Activated CD4-positive, alpha-beta T cell treated with anti-CD3 and anti-CD28 coated beads for 36 hours (primary cell): ENCODE measurements at regions of chr3 and their contacts with region 1.

Region 1: DNA sequence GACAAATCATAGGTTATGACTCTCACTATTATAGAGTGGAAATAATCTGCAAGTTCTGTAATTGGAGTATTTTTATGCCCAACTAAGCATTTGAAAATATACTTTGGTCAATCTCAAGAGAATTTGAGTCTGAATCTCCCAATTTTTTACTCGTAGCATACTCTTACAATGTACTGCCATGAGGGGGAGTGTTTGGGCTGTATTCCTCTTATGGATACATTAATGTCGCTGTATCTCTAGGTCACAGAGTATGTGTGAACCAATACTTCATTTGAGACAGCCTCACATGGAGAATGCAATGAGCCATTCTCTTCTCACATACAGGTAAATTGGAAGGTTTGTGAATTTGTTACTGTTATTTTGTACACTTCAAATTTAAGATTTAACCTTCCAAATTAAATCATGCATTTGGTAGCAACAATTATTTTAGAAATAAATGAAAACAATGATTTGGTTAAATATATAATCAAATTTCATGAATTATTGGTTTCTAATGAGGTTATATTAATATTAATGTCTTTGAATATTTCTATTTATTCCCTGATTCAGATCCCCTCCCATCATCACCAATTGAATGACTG is 5.5 kb upstream of the CD200 start:
- DNase-seq: peak; percentile 54
- ATAC-seq: peak; percentile 100
- H3K4me3 Mint-ChIP-seq: no peak overlapping the region
- H3K27ac Mint-ChIP-seq: no peak overlapping the region
- H3K4me1 Mint-ChIP-seq: peaks cover 4% of the 10 kb centered on the region
- H3K27me3 Mint-ChIP-seq: peaks cover 7% of the 10 kb centered on the region

Region 2: DNA sequence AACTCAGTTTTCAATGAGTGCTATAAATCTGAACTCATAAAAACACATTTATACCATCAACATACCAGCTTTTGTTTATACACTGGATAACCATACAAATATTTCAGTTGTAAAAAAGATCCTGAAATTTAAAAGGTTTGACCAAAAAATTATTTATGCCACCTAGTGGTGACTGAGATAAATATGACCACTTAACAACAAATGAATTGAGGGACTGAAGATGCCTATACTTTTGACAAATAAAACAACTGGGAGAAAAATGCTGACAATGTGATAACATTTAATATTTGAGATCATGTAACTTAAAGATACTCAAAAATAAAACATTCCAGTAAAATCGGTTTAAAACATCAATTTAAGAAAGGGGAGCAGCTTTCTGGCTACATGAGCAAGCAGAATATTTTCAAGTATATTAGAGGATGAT is 203.9 kb after region 1 on chr3:
- CTCF ChIA-PET with region 1: interaction called, 5 read pairs
- POLR2A ChIA-PET with region 1: no interaction called
- intact Hi-C with region 1: loop called (anchors 1 kb)
- DNase-seq: no peak
- ATAC-seq: no peak
- H3K4me3 Mint-ChIP-seq: no peak overlapping the region
- H3K27ac Mint-ChIP-seq: no peak overlapping the region
- H3K4me1 Mint-ChIP-seq: peaks cover 10% of the 10 kb centered on the region
- H3K27me3 Mint-ChIP-seq: no peaks in the 10 kb centered on the region